ENCODE measurements at regions of chr17 and their contacts with region 1.

Region 1: DNA sequence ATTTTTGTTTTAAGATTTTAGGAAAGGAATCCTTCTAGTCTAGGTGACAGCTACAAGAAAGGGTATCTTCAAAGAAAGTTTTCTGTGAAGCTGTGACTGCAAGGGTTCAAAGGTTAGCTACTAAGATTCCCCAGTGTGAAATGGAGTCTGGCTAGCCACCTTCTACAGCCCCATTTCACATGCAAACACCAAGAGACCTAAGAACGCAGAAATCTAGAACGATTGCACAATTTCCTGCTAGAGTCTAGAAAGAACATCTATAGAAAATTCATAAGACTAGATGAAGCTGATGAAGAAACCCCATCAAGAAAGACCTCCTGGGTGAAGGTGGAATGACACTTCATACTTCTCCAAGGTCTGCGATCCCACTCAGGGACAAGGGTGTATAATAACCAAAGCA is 77.1 kb downstream of the STX8 start:
- DNase-seq: no peak
- ATAC-seq: no peak
- H3K4me3 ChIP-seq: no peak overlapping the region
- H3K27ac ChIP-seq: no peak overlapping the region
- H3K4me1 ChIP-seq: no peaks in the 10 kb centered on the region
- H3K27me3 ChIP-seq: no peaks in the 10 kb centered on the region

Region 2: DNA sequence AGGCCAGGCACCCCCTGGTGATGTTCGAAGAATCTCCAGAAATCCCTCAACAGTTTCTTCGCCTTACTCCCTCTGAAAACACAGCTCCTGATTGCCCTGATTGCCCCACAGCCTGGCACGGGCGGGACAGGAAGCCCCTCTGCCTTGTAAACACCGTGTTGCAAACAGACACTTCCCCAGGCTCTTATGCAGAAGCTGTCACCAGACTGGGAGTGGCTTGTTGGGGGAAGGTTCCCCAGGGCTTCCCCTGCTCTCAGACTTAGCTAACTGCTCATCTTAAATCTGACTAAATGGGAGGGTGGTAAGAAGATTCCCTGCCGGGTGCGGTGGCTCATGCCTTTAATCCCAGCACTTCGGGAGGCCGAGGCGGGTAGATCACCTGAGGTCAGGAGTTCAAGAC is 544.2 kb before region 1 on chr17:
- intact Hi-C with region 1: no loop called
- DNase-seq: peak in 1 of 2 donors; percentile 89
- ATAC-seq: peak; percentile 66
- H3K4me3 ChIP-seq: no peak overlapping the region
- H3K27ac ChIP-seq: no peak overlapping the region
- H3K4me1 ChIP-seq: no peaks in the 10 kb centered on the region
- H3K27me3 ChIP-seq: no peaks in the 10 kb centered on the region

Region 3: DNA sequence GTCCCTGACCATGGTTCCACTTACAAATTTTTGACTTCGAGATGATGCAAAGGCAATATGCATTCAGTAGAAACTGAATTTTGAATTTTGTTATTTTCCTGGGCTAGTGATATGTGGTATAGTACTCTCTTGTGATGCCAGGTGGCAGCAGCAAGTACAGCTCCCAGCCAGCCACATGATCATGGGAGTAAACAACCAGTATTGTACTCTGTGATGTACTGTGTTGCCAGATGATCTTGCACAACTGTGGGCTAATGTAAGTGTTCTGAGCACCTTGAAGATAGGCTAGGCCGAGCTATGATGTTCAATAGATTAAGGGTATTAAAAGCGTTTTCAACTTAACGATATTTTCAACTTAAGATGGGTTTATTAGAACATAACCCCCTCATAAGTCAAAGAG is 173.6 kb before region 1 on chr17:
- intact Hi-C with region 1: loop called in 1 of 2 experiments (anchors 5 kb)
- DNase-seq: no peak
- ATAC-seq: no peak
- H3K4me3 ChIP-seq: no peak overlapping the region
- H3K27ac ChIP-seq: no peak overlapping the region
- H3K4me1 ChIP-seq: no peaks in the 10 kb centered on the region
- H3K27me3 ChIP-seq: no peaks in the 10 kb centered on the region

Measured in aorta (tissue), 5 donors.